Activated B cell treated with CpG ODN at 0.5 μM for 24 hours (primary cell): ENCODE measurements at regions of chr16 and their contacts with region 1.

Region 1: GRCh38 chr16:3690470-3690928 is 26.8 kb downstream of the TRAP1 start:
- DNase-seq: peak; percentile 74
- ATAC-seq: peak; percentile 100
- H3K4me3 Mint-ChIP-seq: no peak overlapping the region
- H3K27ac Mint-ChIP-seq: no peak overlapping the region
- H3K4me1 Mint-ChIP-seq: peaks cover 8% of the 10 kb centered on the region
- H3K27me3 Mint-ChIP-seq: no peaks in the 10 kb centered on the region
- CTCF ChIP-seq: peak; percentile 50

Region 2: GRCh38 chr16:3717235-3718018 is 26.9 kb after region 1 on chr16 and contains the start of gene TRAP1:
- CTCF ChIA-PET with region 1: no interaction called
- POLR2A ChIA-PET with region 1: no interaction called
- intact Hi-C with region 1: loop called (anchors 1 kb)
- DNase-seq: peak; percentile 90
- ATAC-seq: peak; percentile 95
- H3K4me3 Mint-ChIP-seq: peak within 1 kb of the TSS; percentile 91
- H3K27ac Mint-ChIP-seq: peak within 1 kb of the TSS; percentile 85
- H3K4me1 Mint-ChIP-seq: peaks cover 20% of the 10 kb centered on the region
- H3K27me3 Mint-ChIP-seq: no peaks in the 10 kb centered on the region
- CTCF ChIP-seq: no peak
- total RNA-seq, gene TRAP1: 78.7 and 82.2 TPM in 2 replicates

Region 3: GRCh38 chr16:3938848-3939624 is 248.5 kb after region 1 on chr16:
- CTCF ChIA-PET with region 1: no interaction called
- POLR2A ChIA-PET with region 1: no interaction called
- intact Hi-C with region 1: loop called (anchors 1 kb)
- DNase-seq: peak; percentile 68
- ATAC-seq: peak; percentile 81
- H3K4me3 Mint-ChIP-seq: no peak overlapping the region
- H3K27ac Mint-ChIP-seq: no peak overlapping the region
- H3K4me1 Mint-ChIP-seq: peaks cover 3% of the 10 kb centered on the region
- H3K27me3 Mint-ChIP-seq: peaks cover 4% of the 10 kb centered on the region
- CTCF ChIP-seq: peak; percentile 36

Region 4: DNA sequence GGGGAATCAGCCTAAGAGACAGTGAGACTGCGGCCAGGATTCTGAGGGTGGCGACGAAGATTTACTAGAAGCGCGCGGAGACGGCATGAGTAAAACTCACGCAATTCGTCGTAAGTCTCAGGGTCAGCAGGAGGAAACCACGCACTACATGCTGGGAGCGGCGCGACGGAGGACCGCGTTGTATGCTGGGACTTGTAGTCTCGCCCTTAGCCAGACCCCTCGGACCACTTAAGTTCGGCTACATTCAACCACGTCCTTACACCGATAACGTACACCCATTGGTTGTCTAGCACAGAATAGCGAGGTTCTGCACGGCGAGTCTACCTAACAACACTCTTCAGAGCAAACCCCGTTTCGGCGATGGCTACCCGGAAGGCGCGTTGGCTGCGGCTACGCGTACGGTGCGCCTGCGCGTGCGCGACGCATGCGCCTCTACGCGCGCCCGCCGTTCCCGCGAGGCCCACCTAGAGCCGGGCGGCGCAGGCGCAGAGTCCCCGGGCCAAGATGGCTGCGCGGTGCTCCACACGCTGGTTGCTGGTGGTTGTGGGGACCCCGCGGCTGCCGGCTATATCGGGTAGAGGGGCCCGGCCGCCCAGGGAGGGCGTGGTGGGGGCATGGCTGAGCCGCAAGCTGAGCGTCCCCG is 735.0 kb after region 1 on chr16 and contains the start of gene DNAJA3:
- CTCF ChIA-PET with region 1: no interaction called
- POLR2A ChIA-PET with region 1: no interaction called
- intact Hi-C with region 1: no loop called
- DNase-seq: peak; percentile 93
- ATAC-seq: peak; percentile 90
- H3K4me3 Mint-ChIP-seq: peak within 1 kb of the TSS; percentile 97
- H3K27ac Mint-ChIP-seq: peak within 1 kb of the TSS; percentile 100
- H3K4me1 Mint-ChIP-seq: peaks cover 31% of the 10 kb centered on the region
- H3K27me3 Mint-ChIP-seq: no peaks in the 10 kb centered on the region
- CTCF ChIP-seq: no peak
- total RNA-seq, gene DNAJA3: 55.3 and 62.6 TPM in 2 replicates